Colonic mucosa (tissue), 4 donors: ENCODE measurements at regions of chr9 and their contacts with region 1.

Region 1: GRCh38 chr9:105881654-105882349 is 187.5 kb downstream of the TMEM38B start:
- DNase-seq: peak; percentile 59
- H3K4me3 ChIP-seq: no peak overlapping the region
- H3K27ac ChIP-seq: no peak overlapping the region
- H3K4me1 ChIP-seq: no peaks in the 10 kb centered on the region
- H3K27me3 ChIP-seq: no peaks in the 10 kb centered on the region
- CTCF ChIP-seq: peak; percentile 82

Region 2: DNA sequence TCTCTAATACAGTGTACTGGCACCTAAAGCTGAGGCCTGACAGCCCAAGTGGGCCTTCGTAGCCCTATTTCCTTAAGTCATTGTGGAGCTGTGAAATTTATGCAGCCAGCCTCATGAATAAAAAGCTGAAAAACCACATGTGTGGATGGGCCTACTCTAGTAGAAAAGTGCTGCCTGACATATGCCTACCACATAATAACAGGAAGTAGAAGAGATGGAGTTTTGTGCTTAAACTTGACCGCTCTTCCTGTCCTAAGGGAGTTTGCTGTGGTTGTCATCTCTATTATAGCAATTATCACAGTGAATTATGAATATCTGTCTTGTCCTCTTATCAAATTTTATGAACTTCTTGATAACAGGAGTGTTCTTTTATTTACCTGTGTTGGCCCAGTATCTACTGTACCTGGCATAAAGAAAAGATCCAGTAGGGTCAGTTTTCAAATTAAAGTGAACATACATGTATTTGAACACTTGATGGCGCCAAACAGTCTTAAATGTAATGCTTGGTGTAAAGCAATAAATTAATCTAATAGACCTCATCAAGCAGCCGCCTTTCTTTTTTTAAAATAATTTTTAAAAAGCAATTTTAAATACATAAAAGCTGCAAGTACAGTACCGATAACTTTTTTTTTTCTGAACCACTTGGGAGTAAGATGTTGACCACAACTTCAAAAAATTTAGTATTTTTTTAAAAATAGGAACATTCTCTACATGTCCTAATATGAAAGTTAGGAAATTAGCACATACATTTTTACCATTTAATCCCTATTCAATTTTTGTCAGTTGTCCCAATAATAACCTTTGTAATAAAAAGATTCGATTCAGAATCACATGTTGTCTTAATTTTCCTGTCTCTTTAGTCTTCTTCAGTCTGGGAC is 272.8 kb before region 1 on chr9:
- intact Hi-C with region 1: loop called (anchors 10 kb)
- DNase-seq: no peak
- H3K4me3 ChIP-seq: no peak overlapping the region
- H3K27ac ChIP-seq: no peak overlapping the region
- H3K4me1 ChIP-seq: no peaks in the 10 kb centered on the region
- H3K27me3 ChIP-seq: no peaks in the 10 kb centered on the region
- CTCF ChIP-seq: peak; percentile 24